ENCODE measurements at regions of chr11 and their contacts with region 1.

Region 1: DNA sequence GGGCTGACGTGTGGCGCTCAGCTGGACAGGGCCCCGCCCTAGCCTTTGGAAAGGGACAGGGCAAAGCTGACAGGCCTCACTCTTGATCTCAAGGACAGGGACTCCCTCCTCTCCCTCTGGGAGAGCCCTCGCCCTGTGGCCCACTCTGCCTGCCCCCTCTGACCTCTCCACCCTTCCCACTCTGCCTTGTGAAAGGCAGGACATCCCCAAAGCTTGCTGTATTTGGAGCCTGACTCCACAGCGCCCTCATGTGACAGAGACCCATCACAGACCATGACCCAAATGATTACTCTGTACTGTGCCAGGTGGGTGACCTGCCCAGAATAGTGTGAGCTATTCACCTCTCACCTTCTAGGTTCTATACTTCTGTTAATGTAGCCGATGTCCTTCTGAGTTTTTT is 18.8 kb downstream of the P2RY2 start:
- DNase-seq: peak; percentile 61
- H3K4me3 ChIP-seq: no peak overlapping the region
- H3K27ac ChIP-seq: no peak overlapping the region
- H3K4me1 ChIP-seq: peaks cover 7% of the 10 kb centered on the region
- H3K27me3 ChIP-seq: no peaks in the 10 kb centered on the region
- CTCF ChIP-seq: peak; percentile 65 to 81
- POLR2A ChIP-seq: no peak

Region 2: DNA sequence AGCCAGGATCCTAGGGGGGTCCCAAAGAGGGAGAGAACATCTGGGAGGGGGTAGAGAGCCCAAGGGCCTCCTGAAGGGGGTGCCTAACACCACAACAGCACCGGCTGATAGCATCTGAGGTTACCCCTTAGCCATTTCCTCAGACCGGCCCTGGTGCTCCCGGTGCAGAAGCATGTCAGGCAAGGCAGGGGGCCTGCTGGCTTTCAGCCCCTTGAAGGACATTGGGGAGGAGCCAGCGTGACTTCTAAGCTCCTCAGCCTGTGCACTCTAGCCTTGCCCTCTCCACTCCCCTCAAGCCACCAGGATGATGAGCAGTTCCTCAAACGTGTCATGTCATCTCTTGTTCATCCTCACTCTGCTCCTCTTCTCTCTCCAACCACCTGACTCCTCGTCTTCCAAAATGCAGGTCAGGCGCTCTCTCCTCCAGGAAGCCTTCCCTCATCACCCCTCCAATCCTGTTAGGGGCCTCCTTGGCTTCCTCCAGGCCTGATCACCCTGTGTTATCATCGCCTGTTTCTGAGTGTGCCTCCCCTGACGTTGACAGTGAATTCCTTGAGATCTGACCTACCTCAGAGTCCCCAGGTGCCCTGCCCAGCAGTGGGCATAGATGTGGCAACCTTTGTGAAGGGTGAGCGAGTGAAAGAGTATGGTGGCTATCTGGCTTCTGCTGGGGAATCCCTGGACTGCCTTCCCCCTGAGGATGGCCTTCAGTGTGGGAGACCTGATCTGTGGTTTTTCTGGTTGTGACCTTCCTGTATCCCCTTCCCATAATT is 12.7 kb before region 1 on chr11:
- CTCF ChIA-PET with region 1: interaction called, 26 read pairs
- POLR2A ChIA-PET with region 1: no interaction called
- dilution Hi-C with region 1: no loop called
- intact Hi-C with region 1: no loop called
- DNase-seq: no peak
- H3K4me3 ChIP-seq: no peak overlapping the region
- H3K27ac ChIP-seq: no peak overlapping the region
- H3K4me1 ChIP-seq: no peaks in the 10 kb centered on the region
- H3K27me3 ChIP-seq: no peaks in the 10 kb centered on the region
- CTCF ChIP-seq: no peak
- POLR2A ChIP-seq: no peak

Measured in endothelial cell of umbilical vein (primary cell).